Activated CD4-positive, alpha-beta T cell treated with anti-CD3 and anti-CD28 coated beads for 36 hours (primary cell): ENCODE measurements at regions of chr12 and their contacts with region 1.

Region 1: DNA sequence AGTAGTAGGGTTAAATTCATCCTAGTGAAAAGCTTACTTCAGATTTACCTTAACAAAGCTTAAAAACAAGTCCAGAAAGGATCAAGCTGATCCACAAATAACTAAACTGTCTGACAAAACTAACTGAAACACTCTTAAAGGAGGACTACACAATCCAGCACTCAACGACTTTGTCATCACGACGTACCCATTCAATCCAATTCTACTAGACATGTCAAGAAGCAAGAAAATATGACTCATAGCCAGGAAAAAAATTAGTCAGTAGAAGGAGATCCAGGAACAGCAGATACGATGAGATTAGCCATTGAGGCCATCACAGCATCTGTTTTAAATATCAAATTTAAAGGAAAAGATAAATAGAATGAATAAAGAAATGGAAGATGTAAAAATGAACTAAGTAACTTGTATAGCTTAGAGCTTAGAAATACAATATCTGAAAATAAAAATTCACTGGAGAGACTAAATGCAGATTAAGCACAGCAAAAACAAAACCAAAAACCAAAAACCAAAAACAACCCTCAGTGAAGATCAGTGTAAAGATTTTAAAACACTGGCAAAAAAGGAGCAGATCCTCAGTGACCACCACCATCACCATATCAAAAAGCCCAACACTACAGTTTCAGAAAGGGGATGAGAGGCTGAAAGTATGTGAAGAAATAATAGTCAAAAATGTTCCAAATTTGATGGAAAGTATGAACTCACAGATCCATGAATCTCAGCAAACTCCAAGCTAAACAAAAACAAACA is 95.0 kb upstream of the CCND2 start:
- DNase-seq: peak; percentile 52
- ATAC-seq: peak; percentile 98
- H3K4me3 Mint-ChIP-seq: peak overlapping the region; percentile 4
- H3K27ac Mint-ChIP-seq: peak overlapping the region; percentile 66
- H3K4me1 Mint-ChIP-seq: peaks cover 21% of the 10 kb centered on the region
- H3K27me3 Mint-ChIP-seq: no peaks in the 10 kb centered on the region

Region 2: DNA sequence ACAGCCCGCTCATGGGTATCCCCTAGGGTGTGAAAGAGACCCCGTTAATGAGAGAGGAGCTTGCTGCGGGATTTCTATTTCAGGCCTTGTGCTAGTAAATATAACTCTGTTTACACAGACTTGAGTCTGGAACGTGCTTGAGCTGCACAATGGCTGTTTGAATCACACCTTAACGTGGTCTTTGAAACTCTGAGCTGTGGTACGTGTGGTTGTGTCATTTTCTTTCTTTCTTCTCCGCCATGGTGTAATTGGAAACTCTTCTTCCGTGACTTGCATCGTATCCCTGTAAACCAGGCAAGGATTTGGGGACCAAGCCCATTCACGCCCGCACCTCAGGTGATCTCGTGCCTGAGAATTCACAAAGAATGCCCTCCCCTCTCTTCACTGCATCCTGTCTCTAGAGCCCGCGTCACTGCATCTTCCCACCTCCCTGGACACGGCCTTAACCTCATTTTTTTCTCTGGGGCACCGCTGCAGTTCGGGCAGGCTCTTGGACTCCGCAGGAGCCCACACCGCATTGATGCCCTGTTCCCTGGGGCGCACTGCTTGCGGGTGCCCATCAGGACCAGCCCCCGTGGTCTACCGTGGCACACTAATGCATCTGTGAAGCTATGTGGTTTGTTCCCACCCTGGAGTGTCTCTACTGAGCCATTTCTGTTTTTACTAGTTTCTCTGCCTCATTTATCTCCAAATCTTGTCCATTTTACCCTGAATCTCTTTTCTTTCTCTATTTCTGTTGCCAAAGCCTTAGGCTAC is 227.0 kb before region 1 on chr12:
- CTCF ChIA-PET with region 1: no interaction called
- POLR2A ChIA-PET with region 1: no interaction called
- intact Hi-C with region 1: no loop called
- DNase-seq: no peak
- ATAC-seq: peak; percentile 18
- H3K4me3 Mint-ChIP-seq: peak overlapping the region; percentile 4
- H3K27ac Mint-ChIP-seq: peak overlapping the region; percentile 89
- H3K4me1 Mint-ChIP-seq: peaks cover 64% of the 10 kb centered on the region
- H3K27me3 Mint-ChIP-seq: no peaks in the 10 kb centered on the region

Region 3: DNA sequence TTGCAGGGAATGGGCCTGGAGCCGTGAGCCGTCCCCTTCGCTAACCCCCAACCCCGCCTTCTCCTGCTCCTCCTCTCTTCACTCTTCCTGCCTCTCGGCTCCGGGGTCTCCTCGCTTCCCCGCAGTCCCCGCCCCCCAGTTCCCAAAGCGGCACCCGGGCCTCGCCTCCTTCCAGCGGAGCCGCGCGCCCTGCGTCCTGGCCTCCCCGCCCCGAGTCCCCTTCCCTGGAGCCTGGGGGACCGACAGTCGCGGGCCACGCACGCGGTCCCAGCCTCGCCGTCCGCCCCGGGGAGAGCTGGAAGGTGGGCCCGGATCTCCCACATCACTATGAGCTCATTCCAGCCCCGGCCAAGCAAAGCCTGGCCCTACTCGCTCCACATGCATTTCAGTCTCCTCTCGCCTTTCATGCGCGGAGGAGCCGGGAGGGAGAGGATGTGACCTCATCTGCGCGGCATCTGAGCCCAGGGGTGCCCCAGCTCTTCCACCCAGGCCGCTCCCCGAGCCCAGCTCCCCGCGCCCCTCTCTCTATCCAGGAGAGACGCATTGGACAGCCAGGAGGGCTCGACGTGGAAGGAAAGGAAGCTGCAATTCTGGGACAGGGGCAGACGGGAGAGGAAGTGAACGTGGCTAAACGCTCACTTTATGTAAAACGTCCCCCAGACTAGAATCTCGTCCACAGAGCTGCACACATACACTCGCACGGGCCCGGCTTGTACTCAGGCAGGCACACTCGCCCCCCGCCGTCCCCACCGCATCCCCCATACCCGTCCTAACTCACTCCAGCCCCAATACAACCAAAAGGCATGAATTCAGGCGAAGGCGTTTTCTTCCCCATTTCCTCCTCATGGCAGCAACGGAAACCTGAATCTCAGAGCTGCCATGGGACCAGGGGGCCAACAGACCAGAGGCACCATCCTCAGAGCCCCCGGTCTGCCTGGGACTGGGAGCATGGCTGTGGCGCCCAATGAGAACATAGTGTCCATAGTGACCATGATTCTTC is 13.7 kb before region 1 on chr12:
- CTCF ChIA-PET with region 1: interaction called, 12 read pairs
- POLR2A ChIA-PET with region 1: no interaction called
- intact Hi-C with region 1: no loop called
- DNase-seq: peak; percentile 82
- ATAC-seq: peak; percentile 85
- H3K4me3 Mint-ChIP-seq: peak overlapping the region; percentile 75
- H3K27ac Mint-ChIP-seq: peak overlapping the region; percentile 88
- H3K4me1 Mint-ChIP-seq: peaks cover 50% of the 10 kb centered on the region
- H3K27me3 Mint-ChIP-seq: no peaks in the 10 kb centered on the region

Region 4: DNA sequence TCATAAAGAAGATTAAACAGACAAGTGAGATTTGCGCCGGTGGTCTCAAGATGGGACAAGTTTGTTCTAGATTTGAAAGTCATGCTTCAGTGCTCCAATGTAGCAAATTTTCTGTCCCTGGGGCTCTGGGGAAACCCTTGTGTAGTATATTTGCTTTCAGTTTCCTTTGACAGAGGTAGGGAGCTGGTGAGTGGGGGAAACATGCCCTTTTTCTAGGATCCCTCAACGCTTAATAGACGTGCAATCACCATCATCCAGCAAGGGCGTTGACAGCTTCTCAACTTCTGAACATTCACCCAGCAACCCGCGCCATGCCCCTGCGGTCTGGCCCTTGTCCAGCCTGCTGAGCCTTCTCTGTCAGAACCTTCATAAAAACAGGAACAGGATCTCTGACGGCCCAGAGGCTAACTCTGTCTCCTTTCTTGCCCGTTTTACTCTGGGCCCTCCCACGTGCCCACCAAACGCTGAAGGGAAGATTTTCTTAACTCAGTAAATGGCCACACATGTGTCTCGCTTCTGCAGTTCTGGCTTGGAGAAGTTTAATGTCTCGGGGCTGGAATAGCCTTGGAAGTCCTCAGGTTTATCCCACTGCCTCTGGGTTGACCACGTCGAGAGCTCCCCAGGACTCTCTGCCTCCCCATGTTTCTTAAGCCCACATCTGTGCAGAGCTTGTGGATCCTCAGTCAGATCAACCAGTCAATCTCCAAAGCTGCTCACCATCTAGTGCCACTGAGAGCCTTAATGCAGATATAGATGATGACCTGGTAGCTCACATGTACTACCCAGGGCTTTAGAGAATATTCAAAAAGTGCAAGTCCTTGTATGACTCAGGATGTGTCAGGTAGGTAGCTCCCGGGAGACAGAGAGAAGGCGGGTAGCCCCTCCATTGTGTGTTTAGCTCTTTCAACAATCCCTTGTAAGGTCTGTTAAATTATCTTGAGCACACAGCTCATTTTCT is 36.9 kb after region 1 on chr12:
- CTCF ChIA-PET with region 1: no interaction called
- POLR2A ChIA-PET with region 1: no interaction called
- intact Hi-C with region 1: loop called (anchors 2 to 5 kb)
- DNase-seq: peak; percentile 63
- ATAC-seq: peak; percentile 91
- H3K4me3 Mint-ChIP-seq: peak overlapping the region; percentile 43
- H3K27ac Mint-ChIP-seq: peak overlapping the region; percentile 84
- H3K4me1 Mint-ChIP-seq: peaks cover 29% of the 10 kb centered on the region
- H3K27me3 Mint-ChIP-seq: no peaks in the 10 kb centered on the region